Motor neuron (in vitro differentiated cells): ENCODE measurements at regions of chr1 and their contacts with region 1.

Region 1: GRCh38 chr1:54488779-54489626 is 59.0 kb upstream of the ACOT11 start:
- ATAC-seq: peak; percentile 52 to 79 (median 71)
- H3K4me3 ChIP-seq: peak overlapping the region; percentile 29 to 35 (median 31)
- H3K27ac ChIP-seq: peak overlapping the region; percentile 78 to 93
- H3K4me1 ChIP-seq: peaks cover 34 to 36% of the 10 kb centered on the region in 2 donors

Region 2: DNA sequence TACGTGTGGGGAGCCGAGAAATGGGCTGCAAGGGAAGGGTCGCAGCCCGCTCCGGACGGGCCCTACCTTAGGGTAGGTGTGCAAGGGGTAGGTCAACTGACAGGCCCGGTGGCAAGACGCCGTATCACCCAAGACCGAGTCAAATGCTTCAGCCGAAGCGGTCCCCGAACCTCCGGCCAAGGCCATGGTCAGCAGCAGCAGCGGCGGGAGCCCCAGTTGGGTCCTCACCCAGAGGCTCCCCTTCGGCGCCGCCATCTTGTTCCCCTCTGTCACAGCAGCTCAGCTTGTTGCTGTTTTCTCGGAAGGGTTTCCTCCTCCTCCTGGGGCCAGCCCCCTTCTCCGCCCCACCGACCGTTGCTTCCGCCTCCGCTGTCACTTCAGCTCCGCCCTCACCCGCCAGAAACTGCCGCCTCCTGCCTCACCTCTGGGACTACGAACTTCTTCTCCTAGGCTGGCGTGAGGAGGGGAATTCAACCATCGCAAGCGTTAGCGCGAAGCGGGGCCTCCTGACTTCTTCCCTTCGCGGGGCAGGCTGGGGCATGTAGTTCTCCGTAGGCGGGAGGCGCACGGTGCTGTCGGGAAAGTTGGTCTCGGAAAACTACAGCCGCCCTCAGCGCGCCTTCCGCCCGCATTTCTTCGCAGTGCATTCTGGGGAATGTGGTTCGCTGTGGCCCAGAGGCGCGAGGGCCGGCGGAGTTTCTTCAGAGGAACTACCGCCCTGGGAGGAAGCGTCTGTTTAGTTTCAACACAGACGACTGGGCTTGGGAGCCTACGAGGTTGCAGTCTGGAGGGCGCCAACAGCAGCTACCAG is 435.9 kb before region 1 on chr1 and contains the starts of genes TCEANC2 and TMEM59:
- in situ Hi-C with region 1: loop called in 3 of 9 experiments (anchors 25 kb)
- ATAC-seq: peak; percentile 87 to 94 (median 92)
- H3K4me3 ChIP-seq: peak within 1 kb of the TSS; percentile 60 to 89 (median 76)
- H3K27ac ChIP-seq: peak within 1 kb of the TSS; percentile 79 to 90
- H3K4me1 ChIP-seq: peaks cover 7 to 24% of the 10 kb centered on the region in 2 donors
- total RNA-seq, gene TCEANC2: 3.0 to 10.1 (median 7.4) TPM
- total RNA-seq, gene TMEM59: 114 to 406 (median 146) TPM

Region 3: GRCh38 chr1:54273092-54273794 is 215.8 kb before region 1 on chr1:
- in situ Hi-C with region 1: loop called in 6 of 9 experiments (anchors 25 kb)
- ATAC-seq: peak; percentile 79 to 96 (median 90)
- H3K4me3 ChIP-seq: peak overlapping the region in 3 of 5 donors; percentile 1 to 14 (median 1)
- H3K27ac ChIP-seq: peak overlapping the region; percentile 83 to 85
- H3K4me1 ChIP-seq: peaks cover 55 to 56% of the 10 kb centered on the region in 2 donors

Region 4: GRCh38 chr1:54287176-54287650 is 201.8 kb before region 1 on chr1:
- in situ Hi-C with region 1: loop called in 2 of 9 experiments (anchors 25 kb)
- ATAC-seq: peak; percentile 72 to 95 (median 88)
- H3K4me3 ChIP-seq: no peak overlapping the region
- H3K27ac ChIP-seq: peak overlapping the region; percentile 46 to 69
- H3K4me1 ChIP-seq: peaks cover 90 to 96% of the 10 kb centered on the region in 2 donors

Region 5: GRCh38 chr1:54406339-54407153 is 82.5 kb before region 1 on chr1 and contains the start of gene SSBP3:
- in situ Hi-C with region 1: loop called in 8 of 9 experiments (anchors 5 to 10 kb)
- ATAC-seq: peak; percentile 84 to 96 (median 88)
- H3K4me3 ChIP-seq: peak within 1 kb of the TSS; percentile 91 to 97 (median 92)
- H3K27ac ChIP-seq: peak within 1 kb of the TSS; percentile 93 to 96
- H3K4me1 ChIP-seq: peaks cover 56 to 59% of the 10 kb centered on the region in 2 donors
- total RNA-seq, gene SSBP3: 11.3 to 183 (median 60.4) TPM

Region 6: GRCh38 chr1:54413295-54413694 is 75.7 kb before region 1 on chr1:
- in situ Hi-C with region 1: loop called in 8 of 9 experiments (anchors 5 to 10 kb)
- ATAC-seq: peak in 5 of 8 experiments; percentile 44 to 68 (median 59)
- H3K4me3 ChIP-seq: no peak overlapping the region
- H3K27ac ChIP-seq: no peak overlapping the region
- H3K4me1 ChIP-seq: peaks cover 39 to 44% of the 10 kb centered on the region in 2 donors